ENCODE measurements at regions of chr1 and their contacts with region 1.

Region 1: DNA sequence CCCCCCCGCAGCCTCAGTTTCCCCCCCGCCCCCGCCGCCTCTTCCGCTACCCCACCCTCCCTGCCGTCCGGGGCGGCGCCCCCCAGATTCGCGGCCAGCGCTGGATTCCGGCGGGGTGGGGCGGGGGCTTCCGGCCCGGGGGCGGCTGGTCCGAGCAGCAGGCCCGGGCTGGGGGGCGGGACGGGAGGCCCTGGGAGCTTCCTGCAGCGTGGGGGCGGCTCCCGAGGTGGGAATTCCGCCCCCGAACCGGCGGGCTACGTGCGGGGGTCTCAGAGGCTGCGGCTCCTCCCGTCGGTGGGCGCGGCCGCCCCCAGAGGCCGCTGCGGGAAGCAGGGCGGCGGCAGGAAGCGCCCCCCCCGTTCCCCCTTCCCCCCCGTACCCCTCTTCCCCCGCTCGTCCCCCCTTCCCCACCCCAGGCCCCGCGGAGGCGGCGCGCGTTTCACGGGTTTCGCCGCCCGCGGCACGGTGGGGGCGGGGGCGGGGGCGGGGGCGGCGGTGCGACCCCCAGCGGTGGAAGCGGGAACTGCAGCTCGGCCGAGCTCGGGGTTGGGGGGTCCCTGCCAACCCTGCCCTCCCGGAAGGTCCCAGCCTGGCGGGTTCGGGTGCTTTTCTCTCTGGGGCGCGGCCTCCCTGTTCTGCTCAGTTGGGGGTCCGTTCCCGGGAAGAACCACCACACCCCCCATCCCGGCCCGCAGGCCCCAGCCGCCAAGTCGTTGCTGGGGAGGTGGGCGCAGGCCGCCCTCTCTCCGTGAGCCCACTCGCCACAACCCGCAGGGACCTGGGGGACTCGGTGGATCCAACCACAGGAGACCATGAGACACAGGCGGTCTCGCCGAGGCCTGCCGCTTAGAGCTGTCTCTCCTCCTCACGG is 76.3 kb downstream of the MORN1 start:
- DNase-seq: peak; percentile 73 to 87 (median 81)
- ATAC-seq: peak in 3 of 4 donors; percentile 17 to 25 (median 25)
- H3K4me3 ChIP-seq: peak overlapping the region; percentile 34 to 90 (median 71)
- H3K27ac ChIP-seq: peak overlapping the region; percentile 71 to 95 (median 88)
- H3K4me1 ChIP-seq: peaks cover 0 to 88% (median 55%) of the 10 kb centered on the region in 12 donors
- H3K27me3 ChIP-seq: no peaks in the 10 kb centered on the region
- CTCF ChIP-seq: peak; percentile 86 to 100 (median 98)
- POLR2A ChIP-seq: no peak

Region 2: GRCh38 chr1:2194898-2195673 is 120.0 kb before region 1 on chr1:
- intact Hi-C with region 1: loop called (anchors 2 to 10 kb)
- DNase-seq: peak; percentile 92 to 95 (median 94)
- ATAC-seq: peak; percentile 62 to 79 (median 76)
- H3K4me3 ChIP-seq: peak overlapping the region; percentile 51 to 88 (median 73)
- H3K27ac ChIP-seq: peak overlapping the region; percentile 82 to 98 (median 95)
- H3K4me1 ChIP-seq: peaks cover 6 to 67% (median 54%) of the 10 kb centered on the region in 12 donors
- H3K27me3 ChIP-seq: no peaks in the 10 kb centered on the region
- CTCF ChIP-seq: peak; percentile 85 to 98 (median 96)
- POLR2A ChIP-seq: peak in 1 of 2 donors; percentile 31

Region 3: DNA sequence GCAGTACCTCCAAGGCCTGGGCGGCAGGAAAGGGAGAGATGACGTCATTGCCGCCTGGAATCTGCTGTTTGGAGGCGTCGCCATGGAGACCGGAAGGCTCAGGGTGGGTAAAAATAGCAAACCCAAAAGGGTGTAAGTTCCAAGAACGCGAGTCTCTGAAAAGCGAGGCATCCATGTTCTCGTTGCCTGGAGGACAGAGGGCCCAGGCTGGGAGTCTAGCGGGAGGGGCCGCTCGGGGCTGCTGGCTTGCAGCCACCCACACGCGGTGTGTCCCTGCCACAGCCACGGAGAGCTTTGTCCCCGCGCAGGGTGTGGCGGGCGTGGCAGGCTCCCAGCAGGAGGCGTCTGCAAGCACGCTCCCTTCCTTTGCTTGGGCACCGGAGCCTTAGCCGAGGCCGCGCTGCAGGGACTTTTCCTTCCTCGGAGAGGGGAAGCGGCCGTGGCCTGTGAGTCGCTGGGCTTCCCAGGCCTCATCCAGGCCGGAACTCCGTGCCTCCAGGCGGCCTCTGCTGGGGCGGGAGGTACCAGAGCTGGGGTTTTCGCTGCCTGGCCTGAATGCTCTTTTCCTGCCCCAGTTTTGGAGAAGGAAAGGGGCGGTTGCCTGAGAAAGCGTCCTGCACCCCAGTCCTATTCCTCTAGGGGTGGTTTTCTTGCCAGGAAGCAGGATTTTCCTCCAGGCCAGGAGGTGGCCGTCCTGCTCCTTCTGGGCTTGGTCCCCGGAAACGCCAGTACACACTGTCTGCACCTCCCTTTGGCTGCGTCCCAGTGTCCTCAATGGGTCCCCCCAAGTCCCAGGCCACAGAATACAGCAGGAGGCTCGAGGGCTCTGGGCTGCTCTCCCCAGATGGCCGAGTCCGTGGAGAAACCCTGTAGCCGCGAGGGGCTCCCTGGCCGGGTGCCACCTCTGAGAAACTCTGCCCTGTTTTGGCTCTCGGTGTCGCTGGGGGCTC is 102.2 kb before region 1 on chr1:
- intact Hi-C with region 1: loop called in 1 of 10 experiments (anchors 5 kb)
- DNase-seq: peak; percentile 93 to 97 (median 96)
- ATAC-seq: peak; percentile 53 to 74 (median 72)
- H3K4me3 ChIP-seq: peak overlapping the region in 10 of 12 donors; percentile 26 to 56 (median 44)
- H3K27ac ChIP-seq: peak overlapping the region; percentile 92 to 100 (median 98)
- H3K4me1 ChIP-seq: peaks cover 16 to 62% (median 51%) of the 10 kb centered on the region in 12 donors
- H3K27me3 ChIP-seq: no peaks in the 10 kb centered on the region
- CTCF ChIP-seq: peak in 9 of 12 donors; percentile 20 to 55 (median 33)
- POLR2A ChIP-seq: peak in 1 of 2 donors; percentile 49

Region 4: DNA sequence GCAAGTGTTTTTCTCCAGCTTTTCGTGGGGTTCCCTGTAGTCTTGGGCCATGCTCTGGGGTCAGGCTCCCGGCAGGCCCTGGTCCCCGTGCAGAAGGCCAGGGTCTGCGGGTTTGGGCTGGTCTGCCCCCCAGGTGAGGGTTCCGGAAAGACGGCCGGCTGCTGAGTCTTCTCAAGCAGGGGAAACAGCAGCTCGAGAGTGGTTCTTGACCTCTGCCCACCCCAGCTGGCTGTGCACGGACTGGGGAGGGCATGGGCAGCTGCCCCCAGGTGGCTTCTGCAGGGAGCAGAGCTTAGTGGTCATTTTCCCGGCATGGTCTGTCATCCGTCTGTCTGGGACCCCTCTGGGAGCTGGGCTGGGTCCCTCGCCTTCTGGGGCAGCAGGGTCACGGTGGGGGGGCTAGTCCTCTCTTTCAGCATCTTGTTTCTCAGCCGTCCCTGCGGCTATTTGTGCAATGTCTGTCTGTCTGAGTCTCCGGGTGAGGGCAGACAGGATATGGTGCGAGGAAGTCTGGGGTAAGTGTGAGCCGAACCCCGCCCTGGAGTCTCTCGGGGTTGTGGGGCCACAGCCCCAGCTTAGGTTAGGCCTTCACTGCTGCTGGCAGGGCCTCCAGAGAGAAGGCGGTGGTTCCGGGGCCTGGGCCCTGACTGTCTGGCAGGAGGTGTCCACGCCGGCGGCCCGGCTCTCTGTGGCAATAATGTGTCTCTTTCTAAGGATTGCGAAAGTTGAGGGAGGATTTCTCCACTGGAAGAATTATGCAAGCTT is 80.9 kb before region 1 on chr1:
- intact Hi-C with region 1: loop called in 8 of 10 experiments (anchors 2 to 10 kb)
- DNase-seq: peak; percentile 71 to 95 (median 94)
- ATAC-seq: peak; percentile 23 to 84 (median 58)
- H3K4me3 ChIP-seq: peak overlapping the region in 10 of 12 donors; percentile 29 to 89 (median 72)
- H3K27ac ChIP-seq: peak overlapping the region; percentile 51 to 89 (median 70)
- H3K4me1 ChIP-seq: peaks cover 24 to 100% (median 89%) of the 10 kb centered on the region in 12 donors
- H3K27me3 ChIP-seq: no peaks in the 10 kb centered on the region
- CTCF ChIP-seq: no peak
- POLR2A ChIP-seq: peak in 1 of 2 donors; percentile 21

Region 5: GRCh38 chr1:2279210-2279639 is 35.8 kb before region 1 on chr1:
- intact Hi-C with region 1: loop called in 1 of 10 experiments (anchors 5 kb)
- DNase-seq: peak; percentile 73 to 88 (median 79)
- ATAC-seq: peak; percentile 49 to 87 (median 60)
- H3K4me3 ChIP-seq: peak overlapping the region in 2 of 12 donors; percentile 3 to 8
- H3K27ac ChIP-seq: peak overlapping the region in 11 of 12 donors; percentile 0 to 82 (median 72)
- H3K4me1 ChIP-seq: peaks cover 26 to 77% (median 63%) of the 10 kb centered on the region in 12 donors
- H3K27me3 ChIP-seq: no peaks in the 10 kb centered on the region
- CTCF ChIP-seq: no peak
- POLR2A ChIP-seq: no peak

Region 6: GRCh38 chr1:2583865-2584351 is 268.9 kb after region 1 on chr1:
- intact Hi-C with region 1: no loop called
- DNase-seq: peak in 3 of 5 donors; percentile 27 to 62 (median 32)
- ATAC-seq: no peak
- H3K4me3 ChIP-seq: peak overlapping the region in 1 of 12 donors; percentile 88
- H3K27ac ChIP-seq: peak overlapping the region in 2 of 12 donors; percentile 99
- H3K4me1 ChIP-seq: peaks cover 3 to 45% (median 19%) of the 10 kb centered on the region in 12 donors
- H3K27me3 ChIP-seq: peaks cover 0 to 7% (median 0%) of the 10 kb centered on the region in 9 donors
- CTCF ChIP-seq: no peak
- POLR2A ChIP-seq: no peak